ENCODE measurements at regions of chr16 and their contacts with region 1.

Region 1: DNA sequence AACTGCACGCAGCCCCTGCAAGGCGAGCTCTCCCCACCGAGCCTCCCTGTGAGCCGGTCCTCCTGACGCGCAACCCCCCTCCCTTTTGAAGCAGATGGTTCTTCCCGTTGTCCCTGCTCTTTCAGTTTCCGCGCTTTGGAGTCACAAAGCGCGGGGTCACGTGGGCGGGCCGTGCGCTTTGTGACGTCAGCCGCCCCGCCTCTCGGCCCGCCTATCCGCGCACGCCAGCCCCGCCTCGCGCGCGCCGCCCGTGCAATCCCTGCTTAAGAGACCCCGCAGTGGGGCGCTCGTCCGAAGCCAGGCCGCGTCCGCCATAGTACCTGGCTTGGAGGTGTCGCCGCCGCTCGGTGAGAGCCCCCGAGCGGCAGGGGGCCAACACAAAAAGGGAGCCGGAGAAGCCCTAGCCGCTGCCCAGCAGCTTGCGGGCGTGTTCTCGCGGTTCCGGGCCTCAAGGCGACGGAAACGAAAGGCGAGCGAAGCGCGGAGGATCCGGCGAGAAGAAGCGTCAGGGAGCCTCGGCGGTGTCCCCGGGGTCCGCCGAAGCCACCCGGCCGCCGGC is at the start of gene RBBP6:
- DNase-seq: peak; percentile 89 to 94
- ATAC-seq: peak; percentile 92 to 93
- H3K4me3 ChIP-seq: peak within 1 kb of the TSS; percentile 78 to 97 (median 86)
- H3K27ac ChIP-seq: peak within 1 kb of the TSS; percentile 97 to 100 (median 99)
- H3K4me1 ChIP-seq: peaks cover 26 to 36% of the 10 kb centered on the region in 2 donors
- H3K27me3 ChIP-seq: no peaks in the 10 kb centered on the region
- CTCF ChIP-seq: peak in 2 of 5 experiments; percentile 32 to 38
- POLR2A ChIP-seq: peak; percentile 100
- total RNA-seq, gene RBBP6: 33.3 to 57.1 (median 47.8) TPM

Region 2: DNA sequence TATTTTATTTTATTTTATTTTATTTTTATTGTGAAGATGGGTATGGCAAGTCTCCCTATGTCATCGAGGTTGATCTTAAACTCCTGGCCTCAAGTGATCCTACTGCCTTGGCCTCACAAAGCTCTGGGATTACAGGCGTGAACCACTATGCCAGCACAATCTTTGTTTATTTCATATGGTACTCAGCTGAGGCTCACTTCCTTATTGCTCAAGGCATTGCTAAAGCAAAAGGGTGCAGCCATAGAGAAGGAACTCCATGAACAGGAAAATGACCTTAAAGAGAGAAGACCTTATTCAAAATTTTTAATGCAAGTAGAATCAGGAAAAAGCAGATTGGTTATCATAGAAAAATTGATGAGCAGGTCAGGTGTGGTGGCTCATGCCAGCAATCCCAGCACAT is 110.6 kb before region 1 on chr16:
- in situ Hi-C with region 1: no loop called
- intact Hi-C with region 1: no loop called
- DNase-seq: no peak
- ATAC-seq: no peak
- H3K4me3 ChIP-seq: no peak overlapping the region
- H3K27ac ChIP-seq: no peak overlapping the region
- H3K4me1 ChIP-seq: no peaks in the 10 kb centered on the region
- H3K27me3 ChIP-seq: no peaks in the 10 kb centered on the region
- CTCF ChIP-seq: no peak
- POLR2A ChIP-seq: no peak

Region 3: DNA sequence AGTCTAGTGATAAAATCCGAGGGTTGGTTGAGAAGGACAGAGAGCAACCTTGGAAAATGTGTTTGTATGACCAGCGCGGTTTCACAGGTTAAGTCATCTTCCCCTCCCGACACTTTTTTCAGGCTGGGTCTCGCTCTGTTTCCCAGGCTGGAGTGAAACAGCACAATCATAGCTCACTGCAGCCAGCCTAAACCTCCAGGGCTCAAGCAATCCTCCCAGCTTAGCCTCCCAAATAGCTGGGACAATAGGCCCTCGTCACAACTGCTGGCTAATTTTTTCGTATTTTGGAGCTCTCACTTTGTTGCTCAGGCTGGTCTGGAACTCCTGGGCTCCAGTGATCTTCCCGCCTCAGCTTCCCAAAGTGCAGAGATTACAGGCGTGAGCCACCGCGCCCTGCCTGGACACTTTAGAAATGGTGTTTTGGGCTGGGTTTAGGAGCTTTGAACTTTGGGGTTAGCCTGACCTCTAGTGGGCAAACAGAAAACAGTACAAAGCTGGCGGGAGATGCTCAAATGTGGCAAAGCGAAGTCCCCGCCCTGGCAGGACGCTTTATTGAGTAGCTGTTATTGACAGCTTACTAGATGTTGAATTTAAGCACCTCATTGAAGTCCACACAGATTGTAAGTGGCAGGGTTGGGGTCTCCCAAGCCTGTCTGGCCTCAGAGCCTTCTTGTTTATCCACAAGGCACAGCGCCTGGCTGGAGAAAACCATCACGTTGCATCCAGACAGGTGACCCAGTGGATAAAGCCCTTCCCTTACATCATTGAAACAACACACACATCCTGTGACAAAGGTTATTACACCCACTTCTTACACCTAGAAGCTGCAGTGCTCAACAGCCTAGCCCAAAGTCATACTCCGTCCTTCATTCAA is 34.7 kb before region 1 on chr16:
- in situ Hi-C with region 1: no loop called
- intact Hi-C with region 1: loop called (anchors 1 kb)
- DNase-seq: peak in 1 of 2 donors; percentile 8
- ATAC-seq: peak; percentile 56 to 65
- H3K4me3 ChIP-seq: no peak overlapping the region
- H3K27ac ChIP-seq: no peak overlapping the region
- H3K4me1 ChIP-seq: peaks cover 3 to 7% of the 10 kb centered on the region in 2 donors
- H3K27me3 ChIP-seq: no peaks in the 10 kb centered on the region
- CTCF ChIP-seq: peak; percentile 33 to 72 (median 59)
- POLR2A ChIP-seq: no peak

Region 4: DNA sequence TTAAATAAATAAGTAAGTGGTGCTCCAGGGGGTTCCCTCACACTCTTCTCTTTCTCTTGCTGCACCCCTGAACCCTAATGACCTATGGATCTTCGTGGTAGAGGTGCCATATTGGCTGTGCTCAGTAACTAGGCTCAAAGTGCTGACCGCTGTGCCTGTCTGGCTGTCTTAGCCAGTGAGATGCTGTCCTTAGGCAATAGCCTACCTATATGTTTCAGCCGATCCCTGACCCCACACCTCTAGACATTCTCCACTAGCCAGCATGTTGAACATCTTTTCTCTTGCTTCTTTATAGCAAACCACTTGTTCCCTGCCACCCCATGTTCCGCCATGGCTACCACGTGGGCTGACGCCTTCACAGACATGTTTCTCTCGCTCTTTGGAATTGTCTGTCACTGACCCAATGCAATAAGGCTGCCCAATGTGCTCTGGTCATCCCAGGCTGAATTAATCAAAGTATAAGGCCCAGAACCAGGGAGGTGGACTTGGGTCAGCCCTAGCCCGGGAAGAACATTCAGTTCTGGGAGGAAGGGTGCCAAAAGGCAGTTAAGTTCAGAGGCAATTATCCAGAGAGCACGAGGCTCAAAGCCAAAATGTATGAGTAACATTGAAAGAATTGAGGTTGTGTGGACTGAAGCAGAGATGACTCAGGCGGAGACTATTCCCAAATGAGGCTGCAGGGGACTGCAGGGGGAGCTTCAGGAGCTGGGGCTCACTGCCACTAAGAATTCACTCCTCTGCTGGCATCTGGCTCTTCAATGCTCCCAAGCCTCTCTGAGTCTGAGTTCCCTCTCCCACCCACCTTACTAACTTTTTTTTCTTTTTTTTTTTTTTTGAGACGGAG is 161.4 kb after region 1 on chr16:
- in situ Hi-C with region 1: no loop called
- intact Hi-C with region 1: loop called (anchors 10 kb)
- DNase-seq: peak; percentile 86 to 92
- ATAC-seq: peak; percentile 99
- H3K4me3 ChIP-seq: peak overlapping the region in 3 of 4 donors; percentile 1 to 38 (median 27)
- H3K27ac ChIP-seq: peak overlapping the region; percentile 74 to 92 (median 85)
- H3K4me1 ChIP-seq: peaks cover 16 to 23% of the 10 kb centered on the region in 2 donors
- H3K27me3 ChIP-seq: no peaks in the 10 kb centered on the region
- CTCF ChIP-seq: peak in 3 of 5 experiments; percentile 31 to 43 (median 35)
- POLR2A ChIP-seq: no peak

Region 5: DNA sequence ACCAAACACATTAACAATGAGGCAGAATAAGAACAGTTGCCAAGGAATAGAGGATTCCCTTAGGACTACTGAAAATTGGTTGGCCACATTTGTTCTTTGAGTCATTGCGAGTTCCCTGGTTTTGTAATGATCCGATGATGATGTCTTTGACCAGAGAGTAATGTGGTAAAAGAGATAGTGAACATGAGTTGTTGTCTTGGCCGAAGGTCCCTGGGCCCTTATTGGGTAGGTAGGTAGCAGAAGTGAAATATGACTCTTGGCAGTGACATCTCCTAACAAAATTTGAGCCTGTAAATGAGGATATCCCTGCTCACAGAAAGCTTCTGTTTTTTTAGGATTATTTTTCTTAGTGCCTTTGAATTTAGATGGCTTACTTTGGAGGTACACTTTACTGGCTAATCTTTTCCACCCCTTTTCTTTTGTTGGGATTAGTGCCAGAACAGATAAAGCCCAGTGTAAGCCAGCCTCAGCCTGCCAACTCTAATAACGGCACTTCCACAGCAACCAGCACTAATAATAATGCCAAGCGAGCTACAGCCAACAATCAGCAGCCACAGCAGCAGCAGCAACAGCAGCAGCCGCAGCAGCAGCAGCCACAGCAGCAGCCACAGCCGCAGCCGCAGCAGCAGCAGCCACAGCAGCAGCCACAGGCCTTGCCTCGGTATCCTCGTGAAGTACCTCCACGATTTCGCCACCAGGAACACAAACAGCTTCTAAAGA is 237.3 kb after region 1 on chr16:
- in situ Hi-C with region 1: no loop called
- intact Hi-C with region 1: loop called (anchors 5 kb)
- DNase-seq: peak; percentile 73 to 75
- ATAC-seq: peak; percentile 93 to 96
- H3K4me3 ChIP-seq: peak overlapping the region in 1 of 4 donors; percentile 4
- H3K27ac ChIP-seq: peak overlapping the region; percentile 83 to 88 (median 86)
- H3K4me1 ChIP-seq: peaks cover 50 to 58% of the 10 kb centered on the region in 2 donors
- H3K27me3 ChIP-seq: no peaks in the 10 kb centered on the region
- CTCF ChIP-seq: no peak
- POLR2A ChIP-seq: no peak

Region 6: GRCh38 chr16:25031441-25032307 is 492.3 kb after region 1 on chr16:
- in situ Hi-C with region 1: no loop called
- intact Hi-C with region 1: loop called (anchors 5 kb)
- DNase-seq: peak; percentile 91 to 93
- ATAC-seq: peak; percentile 99 to 100
- H3K4me3 ChIP-seq: peak overlapping the region; percentile 73 to 85 (median 80)
- H3K27ac ChIP-seq: peak overlapping the region; percentile 75 to 88 (median 82)
- H3K4me1 ChIP-seq: peaks cover 8 to 11% of the 10 kb centered on the region in 2 donors
- H3K27me3 ChIP-seq: no peaks in the 10 kb centered on the region
- CTCF ChIP-seq: peak in 1 of 5 experiments; percentile 13
- POLR2A ChIP-seq: peak; percentile 63

Region 7: DNA sequence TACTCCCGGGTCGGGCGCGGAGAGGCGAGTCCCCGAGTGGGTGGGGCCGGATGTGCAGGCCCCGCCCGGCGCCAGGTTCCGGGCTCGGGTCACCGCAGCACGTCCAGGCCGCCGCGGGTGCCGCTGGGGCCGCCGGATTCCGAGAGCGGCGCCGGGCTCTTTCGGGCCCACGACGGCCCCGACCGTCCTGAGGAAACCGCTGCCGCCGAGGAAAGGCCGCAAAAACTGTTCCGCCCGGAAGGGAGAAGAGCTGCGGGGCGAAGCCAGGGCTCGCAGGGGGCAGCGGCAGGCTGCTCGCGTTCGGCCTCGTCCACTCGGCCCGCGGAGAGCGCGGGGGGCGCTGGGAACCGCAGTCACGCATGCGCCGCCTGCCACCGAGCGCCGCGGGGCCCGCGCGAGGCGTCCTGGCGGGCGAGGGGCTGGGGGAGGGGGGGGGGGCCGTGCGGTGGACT is 718.2 kb after region 1 on chr16 and contains the start of gene ZKSCAN2:
- in situ Hi-C with region 1: loop called in 2 of 4 experiments (anchors 25 kb)
- intact Hi-C with region 1: loop called (anchors 5 kb)
- DNase-seq: peak; percentile 86 to 87
- ATAC-seq: peak; percentile 83 to 90
- H3K4me3 ChIP-seq: peak within 1 kb of the TSS; percentile 79 to 93 (median 90)
- H3K27ac ChIP-seq: peak within 1 kb of the TSS; percentile 90 to 99 (median 98)
- H3K4me1 ChIP-seq: peaks cover 36 to 49% of the 10 kb centered on the region in 2 donors
- H3K27me3 ChIP-seq: no peaks in the 10 kb centered on the region
- CTCF ChIP-seq: no peak
- POLR2A ChIP-seq: peak; percentile 95 to 96
- total RNA-seq, gene ZKSCAN2: 2.9 to 6.9 (median 5.2) TPM